H1 (cell line): ENCODE measurements at regions of chr11 and their contacts with region 1.

Region 1: DNA sequence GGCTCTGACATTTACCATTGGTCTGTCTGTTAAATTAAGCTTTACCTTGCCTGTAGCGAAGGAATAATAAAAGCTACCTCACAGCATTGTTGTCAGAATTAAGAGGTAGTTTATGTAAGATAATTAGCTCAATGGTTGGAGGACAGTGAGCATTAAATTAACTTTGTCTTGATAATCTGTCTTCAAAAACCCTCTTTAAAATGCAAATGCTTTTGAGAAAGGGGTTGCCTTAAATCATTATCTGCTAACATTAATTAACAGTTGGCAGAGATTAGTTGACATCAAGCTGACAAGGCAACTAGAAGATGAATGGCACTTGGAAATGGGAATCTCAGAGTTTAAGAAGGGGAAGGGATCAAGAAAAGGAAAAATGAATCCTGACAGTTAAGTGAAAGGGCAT is 761.1 kb upstream of the ARHGAP42 start:
- DNase-seq: peak in 1 of 2 experiments; percentile 1
- H3K4me3 ChIP-seq: peak overlapping the region in 1 of 4 experiments; percentile 13; a peak in 1 of 8 replicates
- H3K27ac ChIP-seq: no peak overlapping the region
- H3K4me1 ChIP-seq: no peaks in the 10 kb centered on the region; a peak in 1 of 7 replicates
- H3K27me3 ChIP-seq: peaks cover 0 to 3% (median 2%) of the 10 kb centered on the region in 4 experiments; a peak in 2 of 7 replicates
- CTCF ChIP-seq: no peak
- EP300 ChIP-seq: peak in 1 of 2 experiments; percentile 46; a peak in 1 of 3 replicates
- POLR2A ChIP-seq: no peak
- RAD21 ChIP-seq: no peak

Region 2: GRCh38 chr11:99911116-99911515 is 14.9 kb before region 1 on chr11:
- CTCF ChIA-PET with region 1: interaction called, 30 read pairs
- POLR2A ChIA-PET with region 1: no interaction called
- DNase-seq: no peak
- H3K4me3 ChIP-seq: no peak overlapping the region
- H3K27ac ChIP-seq: no peak overlapping the region
- H3K4me1 ChIP-seq: no peaks in the 10 kb centered on the region
- H3K27me3 ChIP-seq: no peaks in the 10 kb centered on the region
- CTCF ChIP-seq: peak in 2 of 3 experiments; percentile 10 to 43; a peak in 2 of 4 replicates
- EP300 ChIP-seq: no peak
- POLR2A ChIP-seq: no peak
- RAD21 ChIP-seq: peak; percentile 55 to 56